B cell (primary cell): ENCODE measurements at regions of chr1 and their contacts with region 1.

Region 1: GRCh38 chr1:94854458-94855306 is 34.5 kb downstream of the SLC44A3 start:
- DNase-seq: peak; percentile 87
- ATAC-seq: peak; percentile 98
- H3K4me3 ChIP-seq: peak overlapping the region in 4 of 5 experiments; percentile 23 to 75 (median 58)
- H3K4me3 Mint-ChIP-seq: no peak overlapping the region
- H3K27ac ChIP-seq: no peak overlapping the region
- H3K27ac Mint-ChIP-seq: no peak overlapping the region
- H3K4me1 ChIP-seq: peaks cover 5 to 6% of the 10 kb centered on the region in 2 donors
- H3K4me1 Mint-ChIP-seq: no peaks in the 10 kb centered on the region
- H3K27me3 ChIP-seq: peaks cover 0 to 6% (median 2%) of the 10 kb centered on the region in 4 experiments
- H3K27me3 Mint-ChIP-seq: peaks cover 4% of the 10 kb centered on the region
- CTCF ChIP-seq: peak; percentile 83

Region 2: DNA sequence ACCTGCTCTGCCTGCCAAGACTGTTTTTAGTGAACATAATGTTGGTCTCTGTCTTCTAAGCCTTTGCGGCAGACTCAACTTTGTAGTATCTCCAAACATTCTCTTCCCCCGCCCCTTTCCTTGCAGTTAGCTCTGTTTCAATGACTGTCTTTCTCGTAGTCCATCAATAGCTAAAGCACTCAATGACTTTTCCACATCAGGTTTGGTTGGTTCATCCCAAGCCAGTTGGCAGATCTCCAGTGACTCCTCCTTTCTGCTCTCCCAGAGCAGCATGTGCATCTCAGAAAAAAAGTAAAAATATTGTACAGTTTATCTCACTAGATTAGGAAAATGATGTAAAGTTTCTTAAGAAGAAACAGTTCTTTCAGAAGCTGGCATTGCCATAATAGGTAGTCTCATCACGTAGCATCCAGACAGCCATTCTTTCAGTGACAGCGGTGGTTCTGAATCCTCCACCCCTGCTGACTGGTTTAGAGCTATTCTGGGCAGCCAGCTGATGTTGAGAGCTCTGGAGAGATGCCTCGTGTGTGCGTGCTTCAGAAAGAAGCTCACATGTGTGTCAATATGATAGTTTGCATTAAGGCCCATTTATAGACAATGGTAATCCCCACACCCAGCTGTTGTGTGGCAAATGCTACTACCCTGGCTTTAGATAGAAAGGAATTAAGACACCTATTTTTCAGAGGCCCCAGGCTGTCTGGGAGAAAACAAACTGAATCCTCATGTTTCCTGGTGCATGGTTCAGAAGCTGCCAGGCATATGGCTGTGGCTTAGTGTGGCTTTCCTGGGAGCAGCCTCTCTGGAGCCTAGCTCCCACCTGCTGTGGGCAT is 19.1 kb after region 1 on chr1:
- CTCF ChIA-PET with region 1: interaction called, 22 read pairs
- POLR2A ChIA-PET with region 1: no interaction called
- intact Hi-C with region 1: no loop called
- DNase-seq: no peak
- ATAC-seq: no peak
- H3K4me3 ChIP-seq: no peak overlapping the region
- H3K4me3 Mint-ChIP-seq: no peak overlapping the region
- H3K27ac ChIP-seq: no peak overlapping the region
- H3K27ac Mint-ChIP-seq: no peak overlapping the region
- H3K4me1 ChIP-seq: no peaks in the 10 kb centered on the region
- H3K4me1 Mint-ChIP-seq: no peaks in the 10 kb centered on the region
- H3K27me3 ChIP-seq: peaks cover 0 to 9% (median 7%) of the 10 kb centered on the region in 4 experiments
- H3K27me3 Mint-ChIP-seq: peaks cover 29% of the 10 kb centered on the region
- CTCF ChIP-seq: no peak

Region 3: DNA sequence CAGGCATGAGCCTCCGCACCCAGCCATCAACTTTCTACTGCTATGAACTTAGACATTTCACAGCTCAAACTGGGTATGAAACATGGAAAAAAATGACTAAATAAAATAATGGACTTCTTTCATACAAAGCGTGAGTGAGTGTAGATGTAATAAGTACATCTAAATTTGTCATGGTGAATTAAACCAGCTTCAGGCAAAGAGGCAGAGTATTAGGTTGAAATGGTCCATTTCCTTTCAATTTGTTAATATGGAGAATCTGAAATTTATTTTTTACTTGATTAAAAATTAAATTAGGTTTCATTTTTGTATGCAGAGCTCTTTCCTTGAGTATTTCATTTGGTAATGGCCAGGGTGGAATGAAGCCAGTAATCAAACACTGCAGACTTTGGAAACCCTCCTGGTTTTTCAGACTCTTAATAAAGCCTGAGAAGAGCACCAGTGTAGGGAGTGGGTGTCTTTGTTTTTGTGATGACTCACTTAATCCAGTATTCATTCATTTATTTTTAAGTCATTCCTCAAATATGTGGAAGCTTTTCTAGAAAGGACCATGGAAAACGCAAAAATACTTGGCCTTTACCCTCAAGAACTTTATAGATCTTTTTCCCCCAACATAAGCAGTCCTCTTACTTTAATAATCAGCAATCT is 168.8 kb after region 1 on chr1:
- CTCF ChIA-PET with region 1: interaction called, 19 read pairs
- POLR2A ChIA-PET with region 1: no interaction called
- intact Hi-C with region 1: no loop called
- DNase-seq: no peak
- ATAC-seq: no peak
- H3K4me3 ChIP-seq: no peak overlapping the region
- H3K4me3 Mint-ChIP-seq: no peak overlapping the region
- H3K27ac ChIP-seq: no peak overlapping the region
- H3K27ac Mint-ChIP-seq: no peak overlapping the region
- H3K4me1 ChIP-seq: no peaks in the 10 kb centered on the region
- H3K4me1 Mint-ChIP-seq: no peaks in the 10 kb centered on the region
- H3K27me3 ChIP-seq: no peaks in the 10 kb centered on the region
- H3K27me3 Mint-ChIP-seq: no peaks in the 10 kb centered on the region
- CTCF ChIP-seq: no peak

Region 4: DNA sequence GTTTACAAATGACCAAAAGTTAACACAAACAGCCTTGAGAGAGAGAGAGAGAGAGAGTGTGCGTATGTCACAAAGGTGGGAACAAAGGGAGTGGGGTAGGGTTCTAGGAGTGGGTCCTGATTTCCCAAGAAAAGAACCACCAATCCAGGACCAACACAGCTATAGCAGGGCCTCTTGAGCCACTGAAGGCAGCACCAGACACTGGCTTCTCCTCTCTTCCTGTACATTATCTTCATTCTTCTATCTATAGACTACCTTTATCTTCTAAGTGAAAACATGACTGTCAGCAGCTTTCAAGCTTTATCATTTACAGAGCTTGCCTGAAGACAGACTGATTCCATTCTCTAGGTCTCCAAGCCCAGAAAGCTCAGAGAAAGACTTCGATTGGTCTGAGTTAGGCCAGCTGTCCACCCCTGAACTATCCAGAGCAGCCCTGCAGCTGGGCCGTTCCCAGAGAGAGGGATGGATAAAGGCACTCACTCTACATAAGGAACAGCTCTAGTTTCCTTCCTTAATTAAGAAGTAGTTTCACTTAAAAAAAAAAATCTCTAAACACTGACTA is 206.8 kb after region 1 on chr1:
- CTCF ChIA-PET with region 1: interaction called, 17 read pairs
- POLR2A ChIA-PET with region 1: no interaction called
- intact Hi-C with region 1: no loop called
- DNase-seq: no peak
- ATAC-seq: no peak
- H3K4me3 ChIP-seq: no peak overlapping the region
- H3K4me3 Mint-ChIP-seq: no peak overlapping the region
- H3K27ac ChIP-seq: no peak overlapping the region
- H3K27ac Mint-ChIP-seq: no peak overlapping the region
- H3K4me1 ChIP-seq: no peaks in the 10 kb centered on the region
- H3K4me1 Mint-ChIP-seq: no peaks in the 10 kb centered on the region
- H3K27me3 ChIP-seq: no peaks in the 10 kb centered on the region
- H3K27me3 Mint-ChIP-seq: no peaks in the 10 kb centered on the region
- CTCF ChIP-seq: no peak

Region 5: DNA sequence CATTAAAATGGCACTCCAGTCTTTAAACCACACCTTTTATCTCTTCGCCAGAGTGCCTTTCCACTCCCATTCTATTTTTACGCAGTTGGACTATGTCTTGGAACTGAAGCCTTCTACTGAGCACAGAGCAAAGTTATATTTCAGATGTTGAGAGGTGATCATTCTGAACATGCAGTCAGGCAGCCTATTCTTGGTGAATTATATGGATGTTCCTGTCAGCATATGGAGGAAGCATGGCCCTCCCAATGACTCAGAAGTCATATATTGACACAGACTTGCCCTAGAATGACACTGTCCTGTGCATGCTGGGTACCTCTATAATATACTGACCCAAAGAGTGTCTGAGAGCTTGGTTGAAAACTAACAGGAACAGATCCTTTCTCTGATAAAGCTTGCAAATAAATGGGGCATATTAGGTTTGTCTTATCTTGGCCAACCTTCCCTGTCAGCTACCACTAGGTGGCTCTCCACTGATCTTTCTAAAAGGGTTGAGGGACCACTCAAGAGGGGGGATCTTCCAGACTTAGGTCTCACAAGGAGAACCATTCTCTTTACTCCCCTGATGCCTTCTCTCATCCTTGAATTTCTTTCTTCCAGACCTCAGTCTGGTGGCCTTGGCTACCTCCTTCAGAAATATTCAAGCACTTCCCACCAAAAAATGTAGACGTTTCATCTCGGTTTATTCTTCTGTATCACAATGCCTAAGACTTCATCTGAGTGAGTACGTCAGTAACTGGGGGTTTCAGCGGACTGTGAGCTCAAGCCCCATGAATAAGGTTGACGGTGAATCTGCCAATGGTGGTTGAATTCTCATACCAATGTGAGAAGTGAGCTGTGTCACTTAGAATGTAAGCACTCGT is 229.9 kb after region 1 on chr1:
- CTCF ChIA-PET with region 1: interaction called, 11 read pairs
- POLR2A ChIA-PET with region 1: no interaction called
- intact Hi-C with region 1: no loop called
- DNase-seq: peak; percentile 67
- ATAC-seq: peak; percentile 78
- H3K4me3 ChIP-seq: no peak overlapping the region
- H3K4me3 Mint-ChIP-seq: no peak overlapping the region
- H3K27ac ChIP-seq: no peak overlapping the region
- H3K27ac Mint-ChIP-seq: no peak overlapping the region
- H3K4me1 ChIP-seq: no peaks in the 10 kb centered on the region
- H3K4me1 Mint-ChIP-seq: no peaks in the 10 kb centered on the region
- H3K27me3 ChIP-seq: peaks cover 0 to 4% (median 0%) of the 10 kb centered on the region in 4 experiments
- H3K27me3 Mint-ChIP-seq: peaks cover 10% of the 10 kb centered on the region
- CTCF ChIP-seq: peak; percentile 81